ENCODE measurements at regions of chr9 and their contacts with region 1.

Region 1: DNA sequence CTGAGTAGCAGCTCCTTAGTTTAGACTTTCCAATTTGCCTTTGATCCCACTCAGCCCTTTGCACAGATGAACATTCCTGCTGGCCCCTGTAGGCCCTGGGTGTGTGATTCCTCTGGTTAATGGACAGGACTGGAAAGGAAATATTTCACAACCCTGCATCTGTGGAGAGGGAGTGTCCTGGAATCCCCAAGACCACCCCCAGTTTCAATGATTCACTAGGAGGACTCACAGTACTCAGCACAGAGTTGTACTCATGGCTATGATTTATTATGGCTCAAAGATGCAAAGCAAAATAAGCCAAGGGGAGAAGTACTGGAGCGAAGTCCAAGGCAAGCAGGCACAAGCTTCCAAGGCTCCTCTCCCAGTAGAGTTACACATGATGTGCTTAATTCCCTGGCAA is 42.4 kb upstream of the TJP2 start:
- DNase-seq: peak in 4 of 7 donors; percentile 12 to 72 (median 32)
- H3K4me3 ChIP-seq: peak overlapping the region in 1 of 4 donors; percentile 19
- H3K27ac ChIP-seq: peak overlapping the region in 2 of 5 donors; percentile 40 to 86
- H3K4me1 ChIP-seq: peaks cover 0 to 14% of the 10 kb centered on the region in 2 donors
- H3K27me3 ChIP-seq: no peaks in the 10 kb centered on the region
- CTCF ChIP-seq: no peak
- POLR2A ChIP-seq: no peak

Region 2: DNA sequence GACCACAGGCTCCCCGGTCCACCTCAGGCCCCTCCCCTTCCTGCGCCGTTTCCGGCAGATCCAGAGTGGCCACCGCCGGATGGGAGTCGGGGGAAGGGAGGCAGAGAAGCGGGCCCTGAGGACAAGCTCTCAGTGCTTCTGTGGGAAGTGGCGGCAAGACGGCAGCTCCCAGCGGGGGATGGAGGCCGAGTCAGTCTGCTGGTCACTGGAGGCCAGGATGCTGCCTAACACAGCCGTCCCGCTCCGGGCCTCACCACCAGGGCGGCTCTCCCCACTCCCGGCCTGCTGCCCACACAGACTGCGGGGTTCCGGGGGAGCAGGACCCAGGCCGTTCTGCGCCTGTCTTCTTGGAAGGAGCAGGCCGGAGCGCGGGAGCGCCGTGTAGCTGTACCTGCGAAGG is 64.7 kb before region 1 on chr9:
- intact Hi-C with region 1: loop called in 1 of 2 experiments (anchors 10 kb)
- DNase-seq: no peak
- H3K4me3 ChIP-seq: no peak overlapping the region
- H3K27ac ChIP-seq: no peak overlapping the region
- H3K4me1 ChIP-seq: peaks cover 0 to 4% of the 10 kb centered on the region in 2 donors
- H3K27me3 ChIP-seq: no peaks in the 10 kb centered on the region
- CTCF ChIP-seq: no peak
- POLR2A ChIP-seq: no peak